ENCODE measurements at regions of chr1 and their contacts with region 1.

Region 1: DNA sequence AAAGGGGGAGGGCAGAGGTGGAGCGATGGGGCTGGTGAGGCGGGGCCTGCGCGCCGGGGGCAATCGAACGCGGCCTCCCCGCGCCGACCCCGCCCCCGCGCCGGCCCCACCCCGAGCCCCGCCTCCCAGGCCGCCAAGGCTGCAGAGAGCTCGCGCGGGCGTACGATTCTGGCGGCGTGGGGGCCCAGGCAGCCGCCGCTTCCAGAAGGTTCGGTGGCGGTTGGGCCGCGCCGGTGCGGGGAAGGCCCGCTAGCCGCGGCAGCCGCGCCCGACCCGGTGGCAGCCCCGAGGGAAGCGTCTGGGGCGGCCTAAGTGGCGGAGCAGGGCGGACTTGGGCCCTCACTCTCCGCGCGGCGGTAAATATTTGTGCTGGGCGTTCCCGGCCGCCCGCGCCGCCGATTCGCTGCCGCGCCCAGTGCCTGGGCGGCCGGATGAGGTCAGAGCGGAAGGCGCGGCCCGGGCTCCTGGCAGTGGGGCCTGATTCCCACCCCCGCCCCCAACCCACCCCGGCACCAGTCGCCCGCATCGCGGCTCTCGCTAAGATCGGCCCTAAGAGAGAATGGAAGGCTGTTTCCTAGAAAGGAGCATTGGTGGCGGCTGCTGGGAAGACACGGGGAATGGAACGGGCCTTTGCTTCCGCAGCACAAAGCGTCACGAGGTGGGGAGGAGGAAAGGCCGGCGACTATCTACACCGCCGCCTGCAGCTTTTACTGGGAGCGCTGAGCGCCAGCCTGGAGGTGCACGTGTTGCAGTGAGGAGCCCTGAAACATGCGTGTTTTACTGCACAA is at the start of gene ACOT7:
- DNase-seq: peak; percentile 96 to 99 (median 99)
- ATAC-seq: peak; percentile 95
- H3K4me3 ChIP-seq: peak within 1 kb of the TSS; percentile 91
- H3K27ac ChIP-seq: peak within 1 kb of the TSS; percentile 91
- H3K4me1 ChIP-seq: peaks cover 13 to 23% of the 10 kb centered on the region in 2 experiments
- H3K27me3 ChIP-seq: no peaks in the 10 kb centered on the region
- CTCF ChIP-seq: peak; percentile 27 to 46 (median 30); a peak in 3 of 6 replicates
- EP300 ChIP-seq: peak; percentile 50
- POLR2A ChIP-seq: peak; percentile 90
- RAD21 ChIP-seq: peak in 1 of 2 experiments; percentile 29; a peak in 1 of 4 replicates
- polyA plus RNA-seq, gene ACOT7: 7.0 to 10.0 TPM

Region 2: GRCh38 chr1:6262555-6263420 is 130.8 kb before region 1 on chr1:
- CTCF ChIA-PET with region 1: no interaction called
- POLR2A ChIA-PET with region 1: no interaction called
- in situ Hi-C with region 1: no loop called
- intact Hi-C with region 1: no loop called
- DNase-seq: no peak
- ATAC-seq: no peak
- H3K4me3 ChIP-seq: no peak overlapping the region
- H3K27ac ChIP-seq: no peak overlapping the region
- H3K4me1 ChIP-seq: peaks cover 0 to 66% of the 10 kb centered on the region in 2 experiments; a peak in 3 of 5 replicates
- H3K27me3 ChIP-seq: peaks cover 0 to 10% of the 10 kb centered on the region in 2 experiments; a peak in 2 of 5 replicates
- CTCF ChIP-seq: no peak
- EP300 ChIP-seq: no peak
- POLR2A ChIP-seq: no peak
- RAD21 ChIP-seq: no peak

Region 3: DNA sequence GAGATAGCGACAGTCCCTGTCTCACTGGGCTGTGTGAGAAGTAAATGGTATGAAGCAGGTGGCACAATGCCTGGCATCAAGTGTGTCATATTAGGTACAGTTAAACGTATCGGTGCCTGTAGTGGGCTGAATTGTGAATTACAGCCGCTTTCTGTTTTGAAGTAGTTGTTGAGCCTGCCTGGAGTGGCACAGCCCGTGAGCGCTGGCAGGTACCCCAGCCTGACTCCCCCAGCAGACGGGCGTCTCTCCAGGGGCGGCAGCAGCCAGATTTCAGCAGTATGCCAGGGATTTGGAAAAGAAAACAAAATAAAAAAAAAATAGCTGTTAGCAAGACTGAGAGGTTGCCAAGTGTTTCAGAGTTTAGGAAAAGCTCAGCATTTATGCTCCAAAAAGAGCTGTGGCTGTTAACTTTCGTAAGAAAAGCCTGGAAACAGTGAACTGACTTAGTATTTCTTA is 106.1 kb before region 1 on chr1:
- CTCF ChIA-PET with region 1: no interaction called
- POLR2A ChIA-PET with region 1: no interaction called
- in situ Hi-C with region 1: no loop called
- intact Hi-C with region 1: no loop called
- DNase-seq: no peak
- ATAC-seq: no peak
- H3K4me3 ChIP-seq: no peak overlapping the region
- H3K27ac ChIP-seq: no peak overlapping the region
- H3K4me1 ChIP-seq: peaks cover 0 to 11% of the 10 kb centered on the region in 2 experiments; a peak in 1 of 5 replicates
- H3K27me3 ChIP-seq: no peaks in the 10 kb centered on the region; a peak in 1 of 5 replicates
- CTCF ChIP-seq: no peak
- EP300 ChIP-seq: no peak
- POLR2A ChIP-seq: no peak
- RAD21 ChIP-seq: no peak

Region 4: GRCh38 chr1:6342056-6342455 is 51.5 kb before region 1 on chr1:
- CTCF ChIA-PET with region 1: no interaction called
- POLR2A ChIA-PET with region 1: no interaction called
- in situ Hi-C with region 1: no loop called
- intact Hi-C with region 1: no loop called
- DNase-seq: no peak
- ATAC-seq: no peak
- H3K4me3 ChIP-seq: no peak overlapping the region
- H3K27ac ChIP-seq: no peak overlapping the region
- H3K4me1 ChIP-seq: peaks cover 0 to 1% of the 10 kb centered on the region in 2 experiments; a peak in 1 of 5 replicates
- H3K27me3 ChIP-seq: no peaks in the 10 kb centered on the region
- CTCF ChIP-seq: no peak
- EP300 ChIP-seq: no peak
- POLR2A ChIP-seq: no peak
- RAD21 ChIP-seq: no peak

Region 5: GRCh38 chr1:6359216-6360116 is 34.1 kb before region 1 on chr1:
- CTCF ChIA-PET with region 1: interaction called, 4 read pairs
- POLR2A ChIA-PET with region 1: interaction called, 10 read pairs
- in situ Hi-C with region 1: no loop called
- intact Hi-C with region 1: no loop called
- DNase-seq: peak; percentile 50 to 69 (median 58)
- ATAC-seq: peak; percentile 79
- H3K4me3 ChIP-seq: 0 out of 2 replicates have a peak overlapping the region, but pooled peaks have one; percentile 6
- H3K27ac ChIP-seq: peak overlapping the region; percentile 69; the same call in 1 of the 3 replicates
- H3K4me1 ChIP-seq: peaks cover 31 to 45% of the 10 kb centered on the region in 2 experiments
- H3K27me3 ChIP-seq: no peaks in the 10 kb centered on the region
- CTCF ChIP-seq: no peak
- EP300 ChIP-seq: peak; percentile 90
- POLR2A ChIP-seq: no peak
- RAD21 ChIP-seq: no peak

Region 6: GRCh38 chr1:6367381-6368012 is 26.1 kb before region 1 on chr1:
- CTCF ChIA-PET with region 1: interaction called, 4 read pairs
- POLR2A ChIA-PET with region 1: interaction called, 15 read pairs
- in situ Hi-C with region 1: no loop called
- intact Hi-C with region 1: no loop called
- DNase-seq: no peak
- ATAC-seq: no peak
- H3K4me3 ChIP-seq: no peak overlapping the region
- H3K27ac ChIP-seq: no peak overlapping the region
- H3K4me1 ChIP-seq: peaks cover 0 to 11% of the 10 kb centered on the region in 2 experiments; a peak in 2 of 5 replicates
- H3K27me3 ChIP-seq: no peaks in the 10 kb centered on the region
- CTCF ChIP-seq: no peak
- EP300 ChIP-seq: no peak
- POLR2A ChIP-seq: no peak
- RAD21 ChIP-seq: no peak

Region 7: GRCh38 chr1:6378096-6378746 is 15.4 kb before region 1 on chr1:
- CTCF ChIA-PET with region 1: no interaction called
- POLR2A ChIA-PET with region 1: interaction called, 43 read pairs
- in situ Hi-C with region 1: no loop called
- intact Hi-C with region 1: no loop called
- DNase-seq: peak; percentile 61 to 76 (median 71)
- ATAC-seq: peak; percentile 98
- H3K4me3 ChIP-seq: no peak overlapping the region
- H3K27ac ChIP-seq: no peak overlapping the region
- H3K4me1 ChIP-seq: peaks cover 0 to 13% of the 10 kb centered on the region in 2 experiments; a peak in 2 of 5 replicates
- H3K27me3 ChIP-seq: no peaks in the 10 kb centered on the region
- CTCF ChIP-seq: peak; percentile 66 to 86 (median 79)
- EP300 ChIP-seq: no peak
- POLR2A ChIP-seq: no peak
- RAD21 ChIP-seq: peak in 1 of 2 experiments; percentile 55; a peak in 2 of 4 replicates

Region 8: GRCh38 chr1:6423321-6423999 is 29.9 kb after region 1 on chr1:
- CTCF ChIA-PET with region 1: no interaction called
- POLR2A ChIA-PET with region 1: interaction called, 16 read pairs
- in situ Hi-C with region 1: no loop called
- intact Hi-C with region 1: no loop called
- DNase-seq: peak; percentile 74 to 86 (median 81)
- ATAC-seq: peak; percentile 80
- H3K4me3 ChIP-seq: no peak overlapping the region
- H3K27ac ChIP-seq: no peak overlapping the region
- H3K4me1 ChIP-seq: peaks cover 38 to 79% of the 10 kb centered on the region in 2 experiments
- H3K27me3 ChIP-seq: peaks cover 29 to 63% of the 10 kb centered on the region in 2 experiments; a peak in 4 of 5 replicates
- CTCF ChIP-seq: peak; percentile 94 to 99 (median 96)
- EP300 ChIP-seq: no peak
- POLR2A ChIP-seq: no peak
- RAD21 ChIP-seq: peak in 1 of 2 experiments; percentile 77; a peak in 2 of 4 replicates

Region 9: GRCh38 chr1:6554031-6554906 is 160.7 kb after region 1 on chr1 and contains the start of gene NOL9:
- CTCF ChIA-PET with region 1: no interaction called
- POLR2A ChIA-PET with region 1: interaction called, 26 read pairs
- in situ Hi-C with region 1: loop called (anchors 5 kb)
- intact Hi-C with region 1: no loop called
- DNase-seq: peak; percentile 98 to 99 (median 98)
- ATAC-seq: peak; percentile 98
- H3K4me3 ChIP-seq: peak within 1 kb of the TSS; percentile 99
- H3K27ac ChIP-seq: peak within 1 kb of the TSS; percentile 85
- H3K4me1 ChIP-seq: peaks cover 14 to 24% of the 10 kb centered on the region in 2 experiments; a peak in 4 of 5 replicates
- H3K27me3 ChIP-seq: no peaks in the 10 kb centered on the region
- CTCF ChIP-seq: peak; percentile 96 to 98 (median 98)
- EP300 ChIP-seq: peak; percentile 51
- POLR2A ChIP-seq: peak; percentile 91
- RAD21 ChIP-seq: peak; percentile 70 to 76
- polyA plus RNA-seq, gene NOL9: 5.6 to 10.1 TPM

Region 10: DNA sequence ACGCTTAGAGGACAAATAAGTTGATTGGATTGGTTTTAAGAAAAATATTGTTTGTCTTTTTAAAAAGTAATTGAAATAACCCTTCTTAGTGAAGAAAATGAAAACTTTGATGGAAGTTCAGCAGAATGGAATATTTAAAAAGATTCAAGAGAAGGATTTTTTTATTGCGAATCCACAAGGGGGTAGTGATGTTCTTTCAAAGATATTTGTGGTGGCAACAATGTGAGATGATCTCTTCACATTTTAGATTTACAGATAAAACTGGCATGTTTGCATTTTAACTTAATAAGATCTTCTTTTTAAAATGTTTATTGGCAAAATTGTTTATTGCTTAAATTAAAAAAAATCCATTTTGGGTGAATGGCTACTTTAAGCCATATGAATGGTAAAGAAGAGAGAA is 400.6 kb after region 1 on chr1:
- CTCF ChIA-PET with region 1: no interaction called
- POLR2A ChIA-PET with region 1: no interaction called
- in situ Hi-C with region 1: no loop called
- intact Hi-C with region 1: no loop called
- DNase-seq: peak in 1 of 4 experiments; percentile 36
- ATAC-seq: no peak
- H3K4me3 ChIP-seq: no peak overlapping the region
- H3K27ac ChIP-seq: no peak overlapping the region
- H3K4me1 ChIP-seq: peaks cover 0 to under 1% of the 10 kb centered on the region in 2 experiments; a peak in 1 of 5 replicates
- H3K27me3 ChIP-seq: no peaks in the 10 kb centered on the region
- CTCF ChIP-seq: peak in 2 of 3 experiments; percentile 40 to 71; a peak in 3 of 6 replicates
- EP300 ChIP-seq: no peak
- POLR2A ChIP-seq: no peak
- RAD21 ChIP-seq: peak; percentile 64 to 77

Measured in K562 (cell line).